ENCODE measurements at regions of chr18 and their contacts with region 1.

Region 1: GRCh38 chr18:2104620-2105462 is 466.5 kb downstream of the METTL4 start:
- DNase-seq: peak; percentile 61
- ATAC-seq: peak; percentile 58
- H3K4me3 Mint-ChIP-seq: no peak overlapping the region
- H3K27ac Mint-ChIP-seq: no peak overlapping the region
- H3K4me1 Mint-ChIP-seq: no peaks in the 10 kb centered on the region
- H3K27me3 Mint-ChIP-seq: peaks cover 5% of the 10 kb centered on the region
- CTCF ChIP-seq: peak; percentile 89

Region 2: DNA sequence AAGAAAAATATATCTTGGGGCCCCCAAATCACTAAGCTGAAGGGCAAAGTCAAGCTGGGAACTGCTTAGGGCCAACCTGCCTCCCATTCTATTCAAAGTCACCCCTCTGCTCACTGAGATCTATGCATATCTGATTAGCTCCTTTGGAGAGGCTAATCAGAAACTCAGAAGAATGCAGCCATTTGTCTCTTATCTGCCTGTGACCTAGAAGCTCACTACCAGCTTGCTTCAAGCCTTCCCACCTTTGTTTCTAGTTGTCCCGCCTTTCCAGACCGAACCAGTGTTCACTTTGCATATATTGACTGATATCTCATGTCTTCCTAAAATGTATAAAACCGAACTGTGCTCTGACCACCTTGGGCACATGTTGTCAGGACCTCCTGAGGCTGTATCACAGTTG is 12.9 kb before region 1 on chr18:
- CTCF ChIA-PET with region 1: interaction called, 36 read pairs
- POLR2A ChIA-PET with region 1: no interaction called
- intact Hi-C with region 1: no loop called
- DNase-seq: no peak
- ATAC-seq: no peak
- H3K4me3 Mint-ChIP-seq: no peak overlapping the region
- H3K27ac Mint-ChIP-seq: no peak overlapping the region
- H3K4me1 Mint-ChIP-seq: no peaks in the 10 kb centered on the region
- H3K27me3 Mint-ChIP-seq: peaks cover 3% of the 10 kb centered on the region
- CTCF ChIP-seq: no peak

Region 3: GRCh38 chr18:2147476-2148230 is 42.8 kb after region 1 on chr18:
- CTCF ChIA-PET with region 1: no interaction called
- POLR2A ChIA-PET with region 1: no interaction called
- intact Hi-C with region 1: no loop called
- DNase-seq: no peak
- ATAC-seq: no peak
- H3K4me3 Mint-ChIP-seq: no peak overlapping the region
- H3K27ac Mint-ChIP-seq: no peak overlapping the region
- H3K4me1 Mint-ChIP-seq: no peaks in the 10 kb centered on the region
- H3K27me3 Mint-ChIP-seq: no peaks in the 10 kb centered on the region
- CTCF ChIP-seq: no peak

Region 4: GRCh38 chr18:2223849-2224248 is 119.0 kb after region 1 on chr18:
- CTCF ChIA-PET with region 1: interaction called, 13 read pairs
- POLR2A ChIA-PET with region 1: no interaction called
- intact Hi-C with region 1: loop called (anchors 10 kb)
- DNase-seq: peak; percentile 10
- ATAC-seq: no peak
- H3K4me3 Mint-ChIP-seq: no peak overlapping the region
- H3K27ac Mint-ChIP-seq: no peak overlapping the region
- H3K4me1 Mint-ChIP-seq: no peaks in the 10 kb centered on the region
- H3K27me3 Mint-ChIP-seq: peaks cover 3% of the 10 kb centered on the region
- CTCF ChIP-seq: peak; percentile 19

Region 5: DNA sequence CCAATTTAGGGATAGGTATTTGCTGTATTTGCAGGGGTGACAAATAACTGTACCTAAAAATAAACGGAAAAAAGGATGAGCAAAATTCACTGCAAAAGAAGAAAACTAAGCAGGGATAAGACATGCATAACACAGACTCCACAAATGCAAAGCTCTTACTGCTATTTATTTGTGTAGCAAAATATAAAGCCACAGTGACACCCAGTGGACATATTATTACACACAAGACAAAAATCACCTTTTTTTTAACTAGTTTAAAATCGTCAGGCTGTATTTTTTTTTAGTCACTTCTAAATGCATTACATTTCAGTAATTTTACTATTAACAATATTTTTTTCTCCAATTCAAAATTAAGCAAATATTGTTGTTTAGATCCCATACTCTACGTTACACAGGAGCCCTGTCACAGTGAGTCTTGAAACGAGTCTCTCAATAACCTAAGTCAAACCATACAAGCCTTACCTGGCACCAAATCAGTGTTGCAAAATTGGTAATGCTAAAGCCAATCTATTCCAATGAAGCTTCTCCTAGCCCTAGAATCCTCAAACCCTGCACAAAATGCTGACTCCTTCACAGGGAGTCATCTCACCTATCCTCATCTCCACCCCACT is 442.7 kb after region 1 on chr18:
- CTCF ChIA-PET with region 1: interaction called, 12 read pairs
- POLR2A ChIA-PET with region 1: no interaction called
- intact Hi-C with region 1: no loop called
- DNase-seq: no peak
- ATAC-seq: peak; percentile 47
- H3K4me3 Mint-ChIP-seq: no peak overlapping the region
- H3K27ac Mint-ChIP-seq: no peak overlapping the region
- H3K4me1 Mint-ChIP-seq: peaks cover 3% of the 10 kb centered on the region
- H3K27me3 Mint-ChIP-seq: no peaks in the 10 kb centered on the region
- CTCF ChIP-seq: peak; percentile 81

Measured in activated CD8-positive, alpha-beta T cell treated with anti-CD3 and anti-CD28 coated beads for 36 hours (primary cell).